Transverse colon (tissue), 4 donors: ENCODE measurements at regions of chr2 and their contacts with region 1.

Region 1: GRCh38 chr2:42095923-42096408 is 48.1 kb downstream of the PKDCC start:
- DNase-seq: peak; percentile 86
- H3K4me3 ChIP-seq: no peak overlapping the region
- H3K27ac ChIP-seq: no peak overlapping the region
- H3K4me1 ChIP-seq: peaks cover 0 to 50% (median 17%) of the 10 kb centered on the region in 4 donors
- H3K27me3 ChIP-seq: no peaks in the 10 kb centered on the region
- CTCF ChIP-seq: peak; percentile 77 to 93 (median 81)
- EP300 ChIP-seq: no peak
- POLR2A ChIP-seq: no peak

Region 2: GRCh38 chr2:41598161-41598894 is 497.6 kb before region 1 on chr2:
- in situ Hi-C with region 1: no loop called
- intact Hi-C with region 1: loop called (anchors 5 kb)
- DNase-seq: no peak
- H3K4me3 ChIP-seq: no peak overlapping the region
- H3K27ac ChIP-seq: peak overlapping the region in 1 of 4 donors; percentile 13
- H3K4me1 ChIP-seq: peaks cover 0 to 12% (median 0%) of the 10 kb centered on the region in 4 donors
- H3K27me3 ChIP-seq: no peaks in the 10 kb centered on the region
- CTCF ChIP-seq: no peak
- EP300 ChIP-seq: no peak
- POLR2A ChIP-seq: no peak

Region 3: GRCh38 chr2:42196403-42197267 is 100.7 kb after region 1 on chr2:
- in situ Hi-C with region 1: loop called in 2 of 4 experiments (anchors 10 kb)
- intact Hi-C with region 1: no loop called
- DNase-seq: peak; percentile 48
- H3K4me3 ChIP-seq: no peak overlapping the region
- H3K27ac ChIP-seq: peak overlapping the region; percentile 41 to 60 (median 48)
- H3K4me1 ChIP-seq: peaks cover 19 to 79% (median 43%) of the 10 kb centered on the region in 4 donors
- H3K27me3 ChIP-seq: no peaks in the 10 kb centered on the region
- CTCF ChIP-seq: peak; percentile 39 to 66 (median 50)
- EP300 ChIP-seq: no peak
- POLR2A ChIP-seq: no peak

Region 4: DNA sequence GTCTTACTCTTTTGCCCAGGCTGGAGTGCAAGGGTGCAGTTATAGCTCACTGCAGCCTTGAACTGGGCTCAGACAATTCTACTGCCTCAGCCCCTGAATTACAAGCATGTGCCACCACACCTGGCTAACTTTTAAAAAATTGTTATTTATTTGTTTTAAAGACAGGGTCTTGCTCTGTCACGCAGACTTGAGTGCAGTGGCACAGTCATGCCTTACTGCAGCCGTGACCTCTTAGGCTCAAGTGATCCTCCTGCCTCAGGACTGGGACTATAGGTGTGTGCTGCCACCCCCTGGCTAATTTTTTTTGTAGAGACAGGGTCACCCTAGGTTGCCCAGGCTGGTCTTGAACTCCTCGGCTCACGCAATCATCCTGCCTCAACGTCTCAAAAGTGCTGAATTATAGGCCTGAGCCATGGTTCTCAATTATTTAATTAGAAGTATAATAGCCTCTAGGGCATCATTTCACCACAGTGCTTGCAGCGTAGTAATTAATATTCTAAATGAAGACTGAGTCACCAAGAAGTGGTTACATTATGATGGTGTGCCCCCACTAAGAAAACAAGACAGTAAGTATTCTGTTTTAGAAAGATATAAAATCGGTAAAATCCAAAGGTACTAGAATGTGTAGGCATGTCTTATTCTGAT is 142.8 kb after region 1 on chr2:
- in situ Hi-C with region 1: loop called in 2 of 4 experiments (anchors 5 to 10 kb)
- intact Hi-C with region 1: loop called (anchors 10 kb)
- DNase-seq: peak; percentile 60
- H3K4me3 ChIP-seq: no peak overlapping the region
- H3K27ac ChIP-seq: no peak overlapping the region
- H3K4me1 ChIP-seq: peaks cover 0 to 60% (median 32%) of the 10 kb centered on the region in 4 donors
- H3K27me3 ChIP-seq: no peaks in the 10 kb centered on the region
- CTCF ChIP-seq: peak; percentile 46 to 65 (median 51)
- EP300 ChIP-seq: no peak
- POLR2A ChIP-seq: no peak

Region 5: DNA sequence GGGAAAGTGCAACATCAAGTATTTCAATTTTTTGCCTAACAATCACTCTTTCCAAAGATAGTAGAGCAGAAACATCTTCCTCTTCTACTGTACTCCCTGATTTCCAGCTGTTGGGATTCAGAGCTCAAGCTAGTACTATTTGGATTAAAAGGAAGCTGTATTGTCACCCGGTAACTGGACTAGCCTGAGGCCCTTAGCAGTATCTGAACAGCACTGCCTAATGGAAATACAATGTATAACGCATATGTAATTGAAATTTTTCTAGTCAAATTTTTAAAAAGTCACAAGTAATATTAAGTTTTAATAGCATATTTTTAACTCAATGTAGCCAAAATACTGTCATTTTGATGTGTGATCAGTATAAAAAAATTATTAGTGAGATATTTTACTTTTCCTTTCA is 178.9 kb after region 1 on chr2:
- in situ Hi-C with region 1: no loop called
- intact Hi-C with region 1: no loop called
- DNase-seq: no peak
- H3K4me3 ChIP-seq: no peak overlapping the region
- H3K27ac ChIP-seq: no peak overlapping the region
- H3K4me1 ChIP-seq: peaks cover 0 to 6% (median 0%) of the 10 kb centered on the region in 4 donors
- H3K27me3 ChIP-seq: no peaks in the 10 kb centered on the region
- CTCF ChIP-seq: no peak
- EP300 ChIP-seq: no peak
- POLR2A ChIP-seq: no peak

Region 6: GRCh38 chr2:42328148-42328833 is 232.3 kb after region 1 on chr2:
- in situ Hi-C with region 1: loop called in 2 of 4 experiments (anchors 10 to 25 kb)
- intact Hi-C with region 1: loop called (anchors 5 kb)
- DNase-seq: no peak
- H3K4me3 ChIP-seq: no peak overlapping the region
- H3K27ac ChIP-seq: no peak overlapping the region
- H3K4me1 ChIP-seq: no peaks in the 10 kb centered on the region
- H3K27me3 ChIP-seq: no peaks in the 10 kb centered on the region
- CTCF ChIP-seq: peak; percentile 31 to 42 (median 34)
- EP300 ChIP-seq: no peak
- POLR2A ChIP-seq: no peak